Naive thymus-derived CD4-positive, alpha-beta T cell (primary cell): ENCODE measurements at regions of chr7 and their contacts with region 1.

Region 1: GRCh38 chr7:23597094-23598091 is at the start of gene CCDC126:
- DNase-seq: peak; percentile 64 to 83 (median 76)
- ATAC-seq: peak; percentile 98
- H3K4me3 ChIP-seq: peak within 1 kb of the TSS; percentile 93
- H3K4me3 Mint-ChIP-seq: peak within 1 kb of the TSS; percentile 86 to 98 (median 94)
- H3K27ac ChIP-seq: peak within 1 kb of the TSS; percentile 74
- H3K27ac Mint-ChIP-seq: peak within 1 kb of the TSS; percentile 59 to 86 (median 80)
- H3K4me1 ChIP-seq: peaks cover 9 to 13% of the 10 kb centered on the region in 2 donors
- H3K4me1 Mint-ChIP-seq: peaks cover 34 to 52% (median 39%) of the 10 kb centered on the region in 7 donors
- H3K27me3 ChIP-seq: no peaks in the 10 kb centered on the region
- H3K27me3 Mint-ChIP-seq: peaks cover 0 to 7% (median 4%) of the 10 kb centered on the region in 5 donors
- total RNA-seq, gene CCDC126: 7.0 to 24.7 (median 17.1) TPM

Region 2: DNA sequence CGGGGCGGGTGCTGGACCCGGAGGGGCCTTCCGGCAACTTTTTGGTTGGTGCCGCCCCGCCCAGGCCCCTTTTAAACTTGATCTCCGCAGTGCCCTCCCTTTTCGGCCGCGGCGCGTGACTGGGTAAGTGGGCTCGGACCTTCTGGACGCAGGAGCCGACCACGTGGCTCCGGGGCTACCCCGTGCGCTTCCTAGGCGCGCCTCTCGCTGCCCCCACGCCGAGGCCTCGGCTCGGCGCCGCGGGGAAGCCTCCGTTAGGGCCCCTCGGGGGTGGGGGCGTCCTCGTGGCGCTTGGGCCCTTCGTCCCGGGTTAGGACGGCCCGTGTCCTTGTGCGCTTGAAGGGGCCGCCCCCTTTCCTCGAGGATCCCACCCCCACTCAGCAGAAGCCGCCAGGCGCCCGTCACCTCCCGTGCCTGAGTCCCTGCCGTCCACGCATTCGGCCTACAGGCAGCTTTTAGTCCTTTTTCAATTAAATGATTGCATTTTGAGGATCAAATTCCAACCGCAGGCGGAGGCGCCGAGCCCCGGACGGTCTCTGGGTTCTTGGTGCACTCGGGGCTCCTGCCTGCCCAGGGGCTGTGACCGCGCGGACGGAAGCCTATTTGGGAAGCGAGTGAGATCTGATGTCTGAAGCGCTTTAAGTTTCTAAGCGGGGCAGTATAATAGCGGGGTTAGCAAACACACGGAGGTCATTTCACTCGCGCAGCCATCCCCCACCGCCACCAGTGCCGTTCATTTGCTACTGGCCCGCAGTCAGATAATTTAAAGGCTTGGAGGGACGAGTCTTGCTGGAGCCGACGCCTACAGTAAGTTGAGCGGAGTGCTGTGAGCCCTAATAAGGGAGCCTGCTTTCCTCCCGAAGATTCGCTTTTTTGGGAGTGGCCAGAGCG is 743.0 kb before region 1 on chr7:
- CTCF ChIA-PET with region 1: no interaction called
- POLR2A ChIA-PET with region 1: no interaction called
- intact Hi-C with region 1: loop called in 1 of 2 experiments (anchors 10 kb)
- DNase-seq: peak in 8 of 9 donors; percentile 9 to 87 (median 70)
- ATAC-seq: peak; percentile 39
- H3K4me3 ChIP-seq: peak overlapping the region; percentile 88
- H3K4me3 Mint-ChIP-seq: peak overlapping the region; percentile 90 to 97 (median 94)
- H3K27ac ChIP-seq: peak overlapping the region; percentile 93
- H3K27ac Mint-ChIP-seq: peak overlapping the region; percentile 85 to 97 (median 92)
- H3K4me1 ChIP-seq: peaks cover 0 to 4% of the 10 kb centered on the region in 2 donors
- H3K4me1 Mint-ChIP-seq: peaks cover 11 to 37% (median 16%) of the 10 kb centered on the region in 7 donors
- H3K27me3 ChIP-seq: no peaks in the 10 kb centered on the region
- H3K27me3 Mint-ChIP-seq: peaks cover 0 to 5% (median 0%) of the 10 kb centered on the region in 5 donors

Region 3: DNA sequence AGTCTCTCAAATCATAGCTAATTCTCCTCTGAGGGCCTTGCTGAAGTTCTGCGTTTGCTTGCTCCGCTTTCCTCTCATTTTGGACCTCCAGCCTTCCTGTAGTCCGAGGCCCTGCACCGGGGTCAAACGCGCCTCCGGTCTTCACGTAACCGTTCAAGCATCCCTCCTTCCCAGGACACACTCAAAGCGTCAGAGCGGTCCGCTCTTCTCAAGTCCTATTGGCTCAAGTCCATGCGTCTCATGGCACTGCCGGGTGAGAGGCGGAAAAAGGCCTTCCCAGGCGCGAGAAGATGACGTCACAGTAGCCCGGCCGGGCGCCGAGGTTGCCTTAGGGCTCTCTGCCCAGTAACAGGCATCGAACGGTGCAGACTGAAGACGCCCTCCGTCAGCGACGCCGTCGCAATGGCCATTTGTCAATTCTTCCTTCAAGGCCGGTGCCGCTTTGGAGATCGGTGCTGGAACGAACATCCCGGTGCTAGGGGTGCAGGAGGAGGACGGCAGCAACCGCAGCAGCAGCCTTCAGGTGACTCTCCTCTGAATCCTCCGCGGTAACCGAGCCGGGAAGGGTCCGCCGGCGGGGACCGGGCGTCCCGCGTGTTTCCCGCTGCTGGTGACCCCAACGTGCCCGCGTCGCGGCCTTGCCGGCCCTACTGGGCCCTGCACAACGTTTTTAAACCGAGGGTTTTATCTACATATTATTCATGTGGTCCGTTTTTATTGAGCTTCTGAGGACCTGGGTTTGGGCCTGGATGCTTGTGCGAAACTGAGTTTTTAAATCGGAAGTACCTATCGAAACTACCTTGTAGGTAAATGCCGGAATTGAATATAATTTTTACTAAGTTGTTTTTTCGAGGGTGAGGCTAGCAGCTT is 415.5 kb before region 1 on chr7 and contains the start of gene NUP42:
- CTCF ChIA-PET with region 1: no interaction called
- POLR2A ChIA-PET with region 1: no interaction called
- intact Hi-C with region 1: loop called (anchors 1 to 2 kb)
- DNase-seq: peak; percentile 87 to 95 (median 93)
- ATAC-seq: peak; percentile 97
- H3K4me3 ChIP-seq: peak within 1 kb of the TSS; percentile 86
- H3K4me3 Mint-ChIP-seq: peak within 1 kb of the TSS; percentile 95 to 100 (median 98)
- H3K27ac ChIP-seq: peak within 1 kb of the TSS; percentile 85
- H3K27ac Mint-ChIP-seq: peak within 1 kb of the TSS; percentile 97 to 99 (median 98)
- H3K4me1 ChIP-seq: peaks cover 16 to 17% of the 10 kb centered on the region in 2 donors
- H3K4me1 Mint-ChIP-seq: peaks cover 20 to 50% (median 43%) of the 10 kb centered on the region in 7 donors
- H3K27me3 ChIP-seq: no peaks in the 10 kb centered on the region
- H3K27me3 Mint-ChIP-seq: peaks cover 0 to 16% (median 0%) of the 10 kb centered on the region in 5 donors
- total RNA-seq, gene NUP42: 19.8 to 37.7 (median 27.5) TPM

Region 4: DNA sequence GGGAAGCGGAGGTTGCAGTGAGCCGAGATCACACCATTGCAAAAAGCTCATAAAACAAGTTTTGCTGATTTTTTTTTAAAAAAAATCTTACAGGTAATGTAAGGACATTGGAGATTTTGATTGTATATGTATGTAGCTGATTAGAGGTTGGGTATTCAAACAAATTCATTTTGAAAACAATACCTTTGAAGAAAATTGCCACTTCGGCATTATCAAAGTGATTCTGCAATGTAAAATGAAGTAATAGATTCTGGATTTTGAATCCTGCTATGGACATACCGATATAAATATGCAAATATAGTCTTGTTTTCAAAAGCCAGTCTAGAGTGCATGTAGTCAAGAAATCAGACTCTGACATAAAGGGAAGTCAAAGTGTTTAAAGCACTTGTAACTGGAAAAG is 114.7 kb before region 1 on chr7:
- CTCF ChIA-PET with region 1: no interaction called
- POLR2A ChIA-PET with region 1: no interaction called
- intact Hi-C with region 1: no loop called
- DNase-seq: no peak
- ATAC-seq: no peak
- H3K4me3 ChIP-seq: no peak overlapping the region
- H3K4me3 Mint-ChIP-seq: no peak overlapping the region
- H3K27ac ChIP-seq: no peak overlapping the region
- H3K27ac Mint-ChIP-seq: no peak overlapping the region
- H3K4me1 ChIP-seq: no peaks in the 10 kb centered on the region
- H3K4me1 Mint-ChIP-seq: no peaks in the 10 kb centered on the region
- H3K27me3 ChIP-seq: peaks cover 11 to 18% of the 10 kb centered on the region in 2 donors
- H3K27me3 Mint-ChIP-seq: peaks cover 16 to 35% (median 28%) of the 10 kb centered on the region in 5 donors

Region 5: DNA sequence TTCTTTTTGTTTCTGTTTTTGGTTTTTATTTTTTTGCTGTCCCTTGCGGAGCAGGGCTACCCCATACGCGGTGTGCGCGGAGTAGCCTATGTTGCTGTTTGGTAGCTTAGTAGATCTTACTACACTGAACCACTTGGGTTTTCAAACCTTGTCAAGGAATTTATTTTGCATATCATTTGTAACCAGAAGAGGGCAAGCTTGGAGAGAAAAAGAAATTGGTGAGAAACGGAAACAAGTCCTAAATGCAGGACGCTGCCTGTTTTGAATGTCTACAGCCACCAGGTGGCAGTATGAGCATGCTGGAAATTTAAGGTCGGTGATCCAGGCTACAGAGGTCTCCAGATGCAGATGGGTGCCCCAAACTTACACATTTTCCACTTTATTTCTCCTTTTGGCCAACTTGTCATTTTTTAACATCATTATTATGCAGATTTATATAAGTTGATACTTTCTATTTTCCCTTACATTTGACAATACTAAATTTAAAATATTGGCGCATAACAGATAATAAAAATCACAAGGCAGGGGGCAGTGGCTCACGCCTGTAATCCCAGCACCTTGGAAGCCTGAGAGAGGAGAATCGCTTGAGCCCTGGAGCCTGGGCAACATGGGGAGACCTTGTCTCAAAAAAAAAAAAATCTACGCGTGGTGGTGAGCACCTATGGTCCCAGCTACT is 50.4 kb before region 1 on chr7:
- CTCF ChIA-PET with region 1: interaction called, 3 read pairs
- POLR2A ChIA-PET with region 1: interaction called, 3 read pairs
- intact Hi-C with region 1: loop called (anchors 1 to 5 kb)
- DNase-seq: peak; percentile 37 to 89 (median 82)
- ATAC-seq: peak; percentile 98
- H3K4me3 ChIP-seq: no peak overlapping the region
- H3K4me3 Mint-ChIP-seq: no peak overlapping the region
- H3K27ac ChIP-seq: no peak overlapping the region
- H3K27ac Mint-ChIP-seq: peak overlapping the region in 6 of 9 donors; percentile 22 to 90 (median 40)
- H3K4me1 ChIP-seq: no peaks in the 10 kb centered on the region
- H3K4me1 Mint-ChIP-seq: peaks cover 0 to 14% (median 5%) of the 10 kb centered on the region in 7 donors
- H3K27me3 ChIP-seq: no peaks in the 10 kb centered on the region
- H3K27me3 Mint-ChIP-seq: peaks cover 0 to 5% (median 0%) of the 10 kb centered on the region in 5 donors

Region 6: DNA sequence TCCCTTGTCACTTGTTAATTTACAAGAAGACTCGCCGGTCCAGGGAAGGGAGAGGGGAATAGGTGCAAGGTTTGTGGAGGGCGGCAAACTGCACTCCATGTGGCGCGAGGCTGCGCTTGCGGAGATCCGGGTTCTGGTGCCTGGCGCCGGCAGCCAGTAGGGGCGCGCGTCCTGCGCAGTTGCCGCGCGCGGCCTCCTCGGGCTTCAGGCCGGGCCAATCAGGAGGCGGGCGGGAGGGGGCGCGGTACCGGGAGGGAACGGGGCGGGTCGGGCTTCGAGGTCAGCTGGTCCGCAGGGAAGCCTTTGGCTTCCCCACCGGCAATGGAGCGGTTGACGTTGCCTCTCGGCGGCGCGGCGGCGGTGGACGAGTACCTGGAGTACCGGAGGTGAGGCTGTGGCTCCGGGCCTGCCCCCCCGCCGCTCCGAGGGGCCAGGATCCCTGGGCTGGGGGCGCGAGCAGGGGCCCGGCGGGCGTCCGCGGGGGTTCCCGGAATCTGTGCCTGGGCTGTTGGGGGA is 82.6 kb after region 1 on chr7 and contains the start of gene FAM221A:
- CTCF ChIA-PET with region 1: interaction called, 3 read pairs
- POLR2A ChIA-PET with region 1: interaction called, 5 read pairs
- intact Hi-C with region 1: loop called (anchors 1 kb)
- DNase-seq: peak; percentile 52 to 80 (median 72)
- ATAC-seq: peak; percentile 99
- H3K4me3 ChIP-seq: peak within 1 kb of the TSS; percentile 95
- H3K4me3 Mint-ChIP-seq: peak within 1 kb of the TSS; percentile 89 to 98 (median 94)
- H3K27ac ChIP-seq: peak within 1 kb of the TSS; percentile 65
- H3K27ac Mint-ChIP-seq: peak within 1 kb of the TSS; percentile 45 to 90 (median 86)
- H3K4me1 ChIP-seq: no peaks in the 10 kb centered on the region
- H3K4me1 Mint-ChIP-seq: peaks cover 0 to 32% (median 13%) of the 10 kb centered on the region in 7 donors
- H3K27me3 ChIP-seq: no peaks in the 10 kb centered on the region
- H3K27me3 Mint-ChIP-seq: peaks cover 0 to 21% (median 3%) of the 10 kb centered on the region in 5 donors
- total RNA-seq, gene FAM221A: 4.0 to 8.1 (median 5.3) TPM

Region 7: GRCh38 chr7:23837659-23838058 is 240.3 kb after region 1 on chr7:
- CTCF ChIA-PET with region 1: no interaction called
- POLR2A ChIA-PET with region 1: no interaction called
- intact Hi-C with region 1: no loop called
- DNase-seq: no peak
- ATAC-seq: no peak
- H3K4me3 ChIP-seq: no peak overlapping the region
- H3K4me3 Mint-ChIP-seq: no peak overlapping the region
- H3K27ac ChIP-seq: no peak overlapping the region
- H3K27ac Mint-ChIP-seq: no peak overlapping the region
- H3K4me1 ChIP-seq: no peaks in the 10 kb centered on the region
- H3K4me1 Mint-ChIP-seq: no peaks in the 10 kb centered on the region
- H3K27me3 ChIP-seq: no peaks in the 10 kb centered on the region
- H3K27me3 Mint-ChIP-seq: peaks cover 0 to 35% (median 25%) of the 10 kb centered on the region in 5 donors

Region 8: GRCh38 chr7:24466168-24466768 is 868.9 kb after region 1 on chr7:
- CTCF ChIA-PET with region 1: no interaction called
- POLR2A ChIA-PET with region 1: no interaction called
- intact Hi-C with region 1: no loop called
- DNase-seq: no peak
- ATAC-seq: no peak
- H3K4me3 ChIP-seq: no peak overlapping the region
- H3K4me3 Mint-ChIP-seq: no peak overlapping the region
- H3K27ac ChIP-seq: no peak overlapping the region
- H3K27ac Mint-ChIP-seq: no peak overlapping the region
- H3K4me1 ChIP-seq: no peaks in the 10 kb centered on the region
- H3K4me1 Mint-ChIP-seq: no peaks in the 10 kb centered on the region
- H3K27me3 ChIP-seq: no peaks in the 10 kb centered on the region
- H3K27me3 Mint-ChIP-seq: peaks cover 0 to 22% (median 0%) of the 10 kb centered on the region in 5 donors

Region 9: DNA sequence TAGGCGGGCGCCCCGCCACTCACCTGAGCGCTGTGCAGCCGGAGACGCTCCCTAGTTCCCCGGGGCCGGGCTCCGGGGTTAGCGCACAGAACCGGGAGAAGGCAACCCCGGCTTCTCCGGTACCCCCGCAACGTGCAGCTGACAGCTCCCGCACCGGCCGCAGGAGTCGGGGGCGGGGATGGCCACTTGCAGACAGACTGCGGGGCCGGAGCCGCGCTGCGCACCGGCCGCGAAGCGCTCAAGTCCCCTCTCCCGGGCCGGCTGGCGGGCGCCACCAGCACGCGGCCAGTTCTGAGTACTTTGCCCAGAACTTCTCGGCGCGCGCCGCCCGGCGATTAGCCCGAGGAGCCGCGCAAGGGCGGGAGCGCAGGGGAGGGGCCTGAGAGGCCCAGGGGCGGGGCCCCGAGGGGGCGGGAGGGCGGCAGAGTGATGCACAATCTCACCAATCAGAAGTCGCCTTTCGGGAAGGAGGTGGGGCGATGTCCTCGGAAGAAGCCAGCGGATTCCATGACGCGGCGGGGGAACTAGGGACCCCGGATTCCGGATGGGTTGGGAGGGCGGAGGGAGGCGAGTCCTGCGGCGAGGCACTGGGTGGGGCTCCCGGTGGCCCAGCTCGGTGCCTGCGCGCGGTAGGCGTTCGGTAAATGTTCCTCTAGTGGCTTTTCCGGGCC is 1382.6 kb after region 1 on chr7 and contains the start of gene OSBPL3:
- CTCF ChIA-PET with region 1: no interaction called
- POLR2A ChIA-PET with region 1: no interaction called
- intact Hi-C with region 1: loop called in 1 of 2 experiments (anchors 1 kb)
- DNase-seq: peak; percentile 86 to 96 (median 93)
- ATAC-seq: peak; percentile 95
- H3K4me3 ChIP-seq: peak within 1 kb of the TSS; percentile 84
- H3K4me3 Mint-ChIP-seq: peak within 1 kb of the TSS; percentile 93 to 97 (median 96)
- H3K27ac ChIP-seq: peak within 1 kb of the TSS; percentile 69
- H3K27ac Mint-ChIP-seq: peak within 1 kb of the TSS; percentile 73 to 95 (median 89)
- H3K4me1 ChIP-seq: peaks cover 26 to 32% of the 10 kb centered on the region in 2 donors
- H3K4me1 Mint-ChIP-seq: peaks cover 40 to 65% (median 56%) of the 10 kb centered on the region in 7 donors
- H3K27me3 ChIP-seq: no peaks in the 10 kb centered on the region
- H3K27me3 Mint-ChIP-seq: peaks cover 0 to 4% (median 0%) of the 10 kb centered on the region in 5 donors
- total RNA-seq, gene OSBPL3: 17.1 to 75.7 (median 22.7) TPM

Region 10: GRCh38 chr7:25179771-25180591 is 1582.6 kb after region 1 on chr7:
- CTCF ChIA-PET with region 1: no interaction called
- POLR2A ChIA-PET with region 1: no interaction called
- intact Hi-C with region 1: loop called (anchors 2 to 5 kb)
- DNase-seq: peak; percentile 88 to 99 (median 94)
- ATAC-seq: peak; percentile 99
- H3K4me3 ChIP-seq: peak overlapping the region; percentile 75
- H3K4me3 Mint-ChIP-seq: peak overlapping the region; percentile 82 to 93 (median 88)
- H3K27ac ChIP-seq: peak overlapping the region; percentile 86
- H3K27ac Mint-ChIP-seq: peak overlapping the region; percentile 83 to 96 (median 92)
- H3K4me1 ChIP-seq: peaks cover 6 to 7% of the 10 kb centered on the region in 2 donors
- H3K4me1 Mint-ChIP-seq: peaks cover 13 to 31% (median 22%) of the 10 kb centered on the region in 7 donors
- H3K27me3 ChIP-seq: no peaks in the 10 kb centered on the region
- H3K27me3 Mint-ChIP-seq: peaks cover 0 to 12% (median 0%) of the 10 kb centered on the region in 5 donors